ACHN (cell line): ENCODE measurements at regions of chr2 and their contacts with region 1.

Region 1: DNA sequence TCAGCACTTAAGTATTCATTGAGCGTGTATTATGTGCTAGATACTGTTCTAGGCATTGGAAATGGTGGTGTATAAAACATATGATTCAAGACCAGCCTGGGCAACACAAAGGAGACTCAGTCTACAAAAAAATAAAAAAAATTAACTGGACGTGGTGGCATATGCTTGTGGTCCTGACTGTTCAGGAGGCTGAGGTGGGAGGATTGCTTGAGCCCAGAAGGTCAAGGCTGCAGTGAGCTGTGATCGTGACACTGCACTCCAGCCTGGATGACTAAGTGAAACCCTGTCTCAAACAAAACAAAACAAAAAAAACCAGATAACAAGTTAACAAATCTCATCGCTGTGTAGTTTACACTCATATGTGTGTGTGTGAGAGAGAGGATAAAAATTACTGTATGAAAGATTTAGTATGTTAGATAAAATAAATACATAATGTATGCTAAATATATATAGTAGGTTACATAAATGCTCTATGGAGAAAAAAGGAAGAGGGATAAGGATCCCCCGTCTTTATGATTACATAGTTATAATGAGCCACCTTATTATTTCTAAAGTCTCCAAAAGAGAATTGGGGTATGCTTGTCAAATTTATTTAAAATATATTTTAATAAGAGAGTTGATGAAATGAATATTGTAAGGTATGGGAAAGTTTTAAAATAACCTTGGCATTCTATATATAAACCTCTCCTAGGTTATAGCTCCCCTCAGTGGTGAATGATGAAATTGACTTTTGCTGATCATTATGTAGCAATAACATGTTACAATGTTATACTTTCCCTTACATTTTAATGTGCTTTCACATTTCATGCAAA is 69.2 kb downstream of the EHBP1 start:
- DNase-seq: peak; percentile 67

Region 2: GRCh38 chr2:62456721-62457539 is 317.8 kb before region 1 on chr2:
- in situ Hi-C with region 1: loop called (anchors 25 kb)
- DNase-seq: peak; percentile 74